GM18951 (cell line): ENCODE measurements at regions of chr11 and their contacts with region 1.

Region 1: GRCh38 chr11:23509023-23509422 is 648.7 kb upstream of the CCDC179 start:
- POLR2A ChIP-seq: no peak

Region 2: DNA sequence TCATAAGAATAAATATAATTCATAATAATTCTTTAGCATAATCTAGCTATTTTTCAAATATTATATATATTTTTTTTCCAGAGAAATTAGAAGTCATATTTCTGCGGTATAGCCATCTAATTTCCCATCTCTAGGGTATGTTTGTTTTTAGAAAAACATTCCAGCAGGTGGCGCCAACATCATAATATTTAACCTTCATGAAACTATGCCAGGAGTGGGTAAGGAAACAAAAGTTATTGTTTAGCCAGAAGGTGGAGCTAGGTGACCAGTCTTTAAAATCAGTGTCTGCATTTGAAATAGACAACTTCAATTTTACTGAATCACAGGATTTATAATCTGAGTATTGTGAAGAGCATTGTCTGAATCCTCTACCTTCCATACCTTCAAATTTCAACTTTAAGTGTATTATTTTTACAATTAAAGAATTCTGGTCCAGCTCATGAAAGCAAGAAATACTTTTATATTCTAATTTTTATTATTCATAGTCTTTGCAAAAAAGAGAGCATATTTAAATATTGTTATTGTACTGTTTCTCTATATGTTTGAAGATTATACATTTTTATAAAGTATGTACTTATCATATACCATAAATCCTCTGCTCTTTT is 633.1 kb before region 1 on chr11:
- in situ Hi-C with region 1: loop called (anchors 25 kb)
- POLR2A ChIP-seq: no peak

Region 3: DNA sequence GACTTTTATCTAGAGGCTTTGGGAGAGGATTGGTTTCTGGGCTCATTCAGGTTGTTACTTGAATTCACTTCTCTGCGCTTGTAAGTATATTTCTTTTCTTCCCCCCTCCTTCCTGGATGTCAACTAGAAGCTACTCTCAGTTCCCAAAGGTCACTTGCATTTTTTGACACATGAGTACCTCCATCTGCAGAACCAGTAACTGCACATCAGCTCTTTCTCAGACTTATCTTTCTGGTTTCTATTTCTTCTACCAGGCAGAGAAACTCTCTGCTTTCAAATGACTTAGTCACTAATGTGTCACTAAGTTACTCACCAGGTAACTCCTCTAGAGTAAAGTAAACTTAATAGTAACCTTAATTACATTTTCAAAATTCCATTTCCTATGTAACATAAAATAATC is 214.8 kb after region 1 on chr11:
- in situ Hi-C with region 1: no loop called
- POLR2A ChIP-seq: no peak

Region 4: DNA sequence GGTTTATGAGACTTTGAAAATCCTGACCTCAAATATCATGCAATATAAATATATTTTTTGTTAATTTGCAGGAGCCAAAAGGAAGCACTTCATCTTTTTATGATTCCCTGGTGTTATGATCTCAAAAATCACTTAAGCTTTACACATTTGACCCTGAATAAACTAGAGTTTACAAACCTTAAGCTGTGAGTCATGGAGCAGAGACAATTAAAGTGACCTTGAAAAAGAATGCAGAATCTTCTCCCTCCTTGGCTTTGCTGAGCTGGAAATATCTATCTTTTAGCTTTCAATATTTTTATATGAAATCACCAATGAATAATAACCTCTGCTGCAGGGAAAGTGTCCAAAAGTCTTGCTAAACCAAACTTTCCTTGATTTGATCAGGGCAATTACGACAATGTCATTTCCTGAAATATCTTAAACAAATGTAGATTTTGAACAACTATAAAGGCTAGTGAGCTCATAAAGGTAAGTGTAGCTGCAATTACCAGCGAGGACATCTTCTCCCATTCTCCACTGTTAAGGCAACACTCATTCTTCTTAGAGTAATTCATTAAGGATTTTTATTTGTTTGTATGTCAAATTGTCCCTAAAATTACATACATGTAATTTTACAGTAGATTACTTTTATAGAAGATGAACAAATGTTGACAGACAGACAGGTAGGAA is 240.9 kb after region 1 on chr11:
- in situ Hi-C with region 1: no loop called
- POLR2A ChIP-seq: no peak

Region 5: GRCh38 chr11:24124732-24125275 is 615.8 kb after region 1 on chr11:
- in situ Hi-C with region 1: no loop called
- POLR2A ChIP-seq: no peak